ENCODE measurements at regions of chrX and their contacts with region 1.

Region 1: GRCh38 chrX:11509786-11510185 is 155.9 kb downstream of the ARHGAP6 start:
- DNase-seq: no peak

Region 2: DNA sequence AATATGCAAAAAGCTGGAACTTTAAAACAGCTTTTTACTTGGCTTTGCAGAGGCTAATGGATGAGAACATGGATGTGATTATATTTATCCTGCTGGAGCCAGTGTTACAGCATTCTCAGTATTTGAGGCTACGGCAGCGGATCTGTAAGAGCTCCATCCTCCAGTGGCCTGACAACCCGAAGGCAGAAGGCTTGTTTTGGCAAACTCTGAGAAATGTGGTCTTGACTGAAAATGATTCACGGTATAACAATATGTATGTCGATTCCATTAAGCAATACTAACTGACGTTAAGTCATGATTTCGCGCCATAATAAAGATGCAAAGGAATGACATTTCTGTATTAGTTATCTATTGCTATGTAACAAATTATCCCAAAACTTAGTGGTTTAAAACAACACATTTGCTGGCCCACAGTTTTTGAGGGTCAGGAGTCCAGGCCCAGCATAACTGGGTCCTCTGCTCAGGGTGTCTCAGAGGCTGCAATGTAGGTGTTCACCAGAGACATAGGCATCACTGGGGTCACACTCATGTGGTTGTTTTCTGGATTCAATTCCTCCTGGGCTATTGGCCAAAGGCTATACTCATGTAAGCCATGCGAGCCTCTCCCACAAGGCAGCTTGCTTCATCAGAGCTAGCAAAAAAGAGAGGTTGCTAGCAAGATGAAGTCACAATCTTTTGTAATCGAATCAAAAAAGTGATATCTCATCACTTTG is 1412.3 kb after region 1 on chrX:
- intact Hi-C with region 1: loop called in 1 of 2 experiments (anchors 5 kb)
- DNase-seq: no peak